Sciatic nerve (tissue), 2 donors: ENCODE measurements at regions of chr6 and their contacts with region 1.

Region 1: DNA sequence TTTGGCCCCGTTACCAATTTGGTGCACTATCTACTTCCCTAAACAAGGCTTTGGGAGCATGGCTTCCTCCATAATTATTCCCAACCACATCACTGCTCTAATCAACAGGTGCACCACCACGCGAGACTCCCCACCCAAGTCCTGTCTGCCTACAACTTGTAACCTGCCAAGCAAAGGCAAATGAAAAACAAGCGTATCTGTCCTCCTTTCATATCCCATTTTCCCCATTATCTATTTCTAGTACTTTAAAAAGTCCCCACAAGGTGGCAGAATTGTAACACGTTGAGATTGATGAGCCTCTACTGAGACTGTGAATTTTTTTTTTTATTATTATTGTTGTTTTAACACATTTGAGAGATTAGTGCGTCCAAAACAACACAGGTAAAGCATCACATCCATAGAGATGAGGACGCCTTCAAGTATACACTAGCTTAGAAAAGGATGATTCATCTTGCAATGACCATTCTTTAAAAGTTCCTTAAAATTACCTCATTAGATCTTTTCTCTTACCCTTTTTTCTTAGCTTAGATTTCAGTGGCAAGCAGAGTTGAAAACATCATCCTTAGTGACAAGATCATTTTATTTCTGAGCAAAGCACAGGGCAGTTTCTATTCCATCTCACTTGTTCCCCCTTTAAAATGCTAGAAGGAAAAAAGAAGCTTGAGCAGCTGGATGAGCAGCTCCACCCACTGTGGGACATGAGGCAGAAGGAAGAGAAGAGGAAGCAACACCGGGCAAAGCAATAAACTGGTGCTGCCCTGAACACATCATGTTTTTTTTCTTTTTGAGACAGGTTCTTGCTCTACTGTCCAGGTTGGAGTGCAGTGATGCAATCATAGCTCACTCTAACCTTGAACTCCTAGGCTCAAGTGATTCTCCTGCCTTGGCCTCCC is 210.8 kb downstream of the ARHGAP18 start:
- DNase-seq: no peak
- ATAC-seq: peak; percentile 73

Region 2: DNA sequence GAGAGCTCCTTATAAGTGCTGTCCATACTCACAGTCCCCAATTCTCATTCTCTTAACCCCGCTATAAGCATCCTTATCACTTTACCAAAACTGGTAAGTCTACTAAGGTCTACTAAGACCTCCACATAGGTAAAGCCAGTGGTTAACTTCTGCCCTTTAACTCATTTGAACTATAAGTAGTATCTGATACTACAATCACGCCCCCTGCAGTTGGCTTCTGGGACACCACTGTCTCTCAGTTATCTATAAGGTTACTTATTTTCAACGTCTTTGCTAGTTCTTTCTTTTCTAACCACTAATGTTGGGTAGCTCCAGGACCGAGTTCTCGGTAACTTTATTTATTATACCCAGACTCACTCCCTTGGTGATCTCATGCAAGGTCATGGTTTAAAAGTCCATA is 68.2 kb after region 1 on chr6:
- intact Hi-C with region 1: loop called (anchors 10 kb)
- DNase-seq: no peak
- ATAC-seq: no peak